Activated naive CD4-positive, alpha-beta T cell treated with anti-CD3 and anti-CD28 coated beads for 36 hours (primary cell): ENCODE measurements at regions of chr1 and their contacts with region 1.

Region 1: GRCh38 chr1:101288491-101288944 is 51.7 kb downstream of the S1PR1 start:
- DNase-seq: peak; percentile 84
- H3K4me3 Mint-ChIP-seq: no peak overlapping the region
- H3K27ac Mint-ChIP-seq: peak overlapping the region; percentile 72
- H3K4me1 Mint-ChIP-seq: peaks cover 84% of the 10 kb centered on the region
- H3K27me3 Mint-ChIP-seq: no peaks in the 10 kb centered on the region

Region 2: DNA sequence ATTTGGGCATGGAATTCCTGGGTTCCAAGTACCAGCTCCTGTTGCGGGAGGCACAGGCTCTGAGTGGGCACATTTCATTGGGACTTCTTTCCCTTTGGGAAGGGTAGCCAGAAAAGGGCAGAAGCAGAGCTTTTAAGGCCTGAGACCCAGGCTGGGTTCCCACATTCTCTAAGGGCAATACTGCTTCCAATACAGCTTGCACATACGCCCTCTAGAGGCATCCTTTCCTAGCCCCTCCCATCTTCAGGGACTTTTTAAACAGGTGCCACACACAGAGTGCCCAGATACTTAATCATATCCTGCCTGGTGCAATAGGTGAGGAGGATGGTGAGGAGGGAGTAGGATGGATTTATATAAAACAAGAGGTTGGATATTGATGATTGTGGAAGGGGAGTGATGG is 744.9 kb before region 1 on chr1:
- CTCF ChIA-PET with region 1: no interaction called
- intact Hi-C with region 1: loop called (anchors 5 kb)
- DNase-seq: peak; percentile 75
- H3K4me3 Mint-ChIP-seq: no peak overlapping the region
- H3K27ac Mint-ChIP-seq: no peak overlapping the region
- H3K4me1 Mint-ChIP-seq: peaks cover 2% of the 10 kb centered on the region
- H3K27me3 Mint-ChIP-seq: peaks cover 23% of the 10 kb centered on the region

Region 3: GRCh38 chr1:100941098-100941527 is 347.4 kb before region 1 on chr1:
- CTCF ChIA-PET with region 1: interaction called, 4 read pairs
- intact Hi-C with region 1: loop called (anchors 5 kb)
- DNase-seq: peak; percentile 58
- H3K4me3 Mint-ChIP-seq: peak overlapping the region; percentile 58
- H3K27ac Mint-ChIP-seq: peak overlapping the region; percentile 92
- H3K4me1 Mint-ChIP-seq: peaks cover 48% of the 10 kb centered on the region
- H3K27me3 Mint-ChIP-seq: peaks cover 2% of the 10 kb centered on the region

Region 4: DNA sequence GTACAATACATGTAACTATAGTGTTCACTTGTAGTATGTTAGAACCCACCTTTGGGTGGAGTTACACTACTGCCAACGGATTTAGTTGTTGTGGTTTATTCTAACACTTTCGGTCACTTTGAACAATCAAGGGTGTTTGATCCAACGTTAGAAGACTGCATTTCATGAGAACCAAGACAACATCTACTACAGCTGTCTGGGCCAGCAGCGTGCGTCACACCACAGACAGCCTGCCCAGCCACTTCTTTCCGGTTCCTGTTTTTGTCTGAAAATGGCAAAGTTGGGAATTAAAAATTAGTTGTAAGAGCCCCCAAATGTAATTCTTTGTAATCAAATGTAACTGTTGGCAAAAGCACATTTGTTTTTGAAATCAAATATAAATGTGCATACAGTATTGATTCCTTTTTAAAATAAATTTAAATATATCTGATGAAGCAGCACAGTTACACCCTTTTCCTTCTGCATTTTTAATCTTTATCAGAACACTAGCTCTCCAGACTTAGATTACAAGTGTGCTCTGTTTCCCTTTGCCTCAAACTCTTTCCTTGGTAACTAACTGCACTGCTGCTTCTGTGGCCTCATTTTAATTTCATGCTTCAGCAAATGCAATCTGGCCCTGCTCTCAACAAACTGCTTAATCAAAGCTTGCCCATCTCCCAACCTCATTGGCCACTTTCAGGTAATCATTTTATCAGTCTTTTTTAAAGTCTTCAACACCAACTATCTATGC is 176.3 kb before region 1 on chr1:
- CTCF ChIA-PET with region 1: interaction called, 9 read pairs
- intact Hi-C with region 1: loop called (anchors 1 kb)
- DNase-seq: peak; percentile 75
- H3K4me3 Mint-ChIP-seq: peak overlapping the region; percentile 54
- H3K27ac Mint-ChIP-seq: peak overlapping the region; percentile 88
- H3K4me1 Mint-ChIP-seq: peaks cover 56% of the 10 kb centered on the region
- H3K27me3 Mint-ChIP-seq: no peaks in the 10 kb centered on the region

Region 5: DNA sequence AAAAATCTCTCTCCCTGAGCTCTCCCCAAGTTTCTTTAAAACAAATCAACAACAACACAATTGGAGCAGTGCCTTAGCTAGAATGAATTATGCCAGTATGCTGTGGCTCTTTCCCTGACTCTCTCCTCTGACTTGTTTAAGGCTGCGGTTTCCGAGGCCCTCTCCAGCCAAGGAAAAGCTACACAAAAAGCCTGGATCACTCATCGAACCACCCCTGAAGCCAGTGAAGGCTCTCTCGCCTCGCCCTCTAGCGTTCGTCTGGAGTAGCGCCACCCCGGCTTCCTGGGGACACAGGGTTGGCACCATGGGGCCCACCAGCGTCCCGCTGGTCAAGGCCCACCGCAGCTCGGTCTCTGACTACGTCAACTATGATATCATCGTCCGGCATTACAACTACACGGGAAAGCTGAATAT is 49.8 kb before region 1 on chr1:
- CTCF ChIA-PET with region 1: interaction called, 91 read pairs
- intact Hi-C with region 1: loop called (anchors 1 kb)
- DNase-seq: peak; percentile 97
- H3K4me3 Mint-ChIP-seq: peak overlapping the region; percentile 99
- H3K27ac Mint-ChIP-seq: peak overlapping the region; percentile 99
- H3K4me1 Mint-ChIP-seq: peaks cover 44% of the 10 kb centered on the region
- H3K27me3 Mint-ChIP-seq: no peaks in the 10 kb centered on the region

Region 6: GRCh38 chr1:101309334-101310311 is 21.1 kb after region 1 on chr1:
- CTCF ChIA-PET with region 1: interaction called, 75 read pairs
- intact Hi-C with region 1: loop called (anchors 1 kb)
- DNase-seq: peak; percentile 80
- H3K4me3 Mint-ChIP-seq: peak overlapping the region; percentile 71
- H3K27ac Mint-ChIP-seq: peak overlapping the region; percentile 48
- H3K4me1 Mint-ChIP-seq: peaks cover 68% of the 10 kb centered on the region
- H3K27me3 Mint-ChIP-seq: no peaks in the 10 kb centered on the region